ENCODE measurements at regions of chr6 and their contacts with region 1.

Region 1: DNA sequence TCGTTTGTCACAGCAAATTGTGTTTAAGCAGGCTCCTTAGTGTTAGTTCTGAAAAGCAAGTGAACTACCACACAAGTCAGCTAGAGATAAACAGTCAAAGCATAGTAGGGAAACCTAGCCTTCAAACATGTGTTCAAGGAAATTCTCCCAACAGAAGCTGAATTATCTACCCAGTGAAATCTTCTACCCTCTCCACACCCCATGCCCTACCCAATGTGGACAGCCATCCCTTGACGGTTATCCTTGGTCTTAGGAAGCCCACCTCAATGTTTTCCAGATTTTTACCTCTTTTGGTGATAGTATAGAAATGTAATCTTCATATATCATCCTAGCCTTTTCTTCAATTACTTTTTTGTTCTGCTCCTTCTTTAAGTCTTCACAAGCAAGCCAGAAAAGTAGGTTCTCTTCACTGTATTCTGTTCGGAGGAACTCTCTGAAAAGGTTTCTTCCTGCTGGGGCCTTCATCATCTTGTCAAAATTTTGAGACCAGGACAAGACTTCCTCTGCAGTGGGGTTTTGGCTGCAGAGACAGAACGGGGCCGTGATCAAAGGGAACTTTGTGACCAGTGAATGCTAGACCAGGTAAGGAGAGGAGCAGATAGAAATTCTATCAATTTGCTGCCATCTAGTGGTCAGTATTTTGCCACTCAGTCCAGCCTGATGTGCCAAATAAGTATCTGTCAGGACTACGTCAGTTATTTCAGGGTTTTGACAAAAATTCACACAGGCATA is 21.6 kb upstream of the MTRF1L start:
- DNase-seq: peak; percentile 17
- ATAC-seq: peak; percentile 78
- H3K4me3 Mint-ChIP-seq: no peak overlapping the region
- H3K27ac Mint-ChIP-seq: no peak overlapping the region
- H3K4me1 Mint-ChIP-seq: peaks cover 2% of the 10 kb centered on the region
- H3K27me3 Mint-ChIP-seq: peaks cover 16% of the 10 kb centered on the region
- CTCF ChIP-seq: no peak

Region 2: DNA sequence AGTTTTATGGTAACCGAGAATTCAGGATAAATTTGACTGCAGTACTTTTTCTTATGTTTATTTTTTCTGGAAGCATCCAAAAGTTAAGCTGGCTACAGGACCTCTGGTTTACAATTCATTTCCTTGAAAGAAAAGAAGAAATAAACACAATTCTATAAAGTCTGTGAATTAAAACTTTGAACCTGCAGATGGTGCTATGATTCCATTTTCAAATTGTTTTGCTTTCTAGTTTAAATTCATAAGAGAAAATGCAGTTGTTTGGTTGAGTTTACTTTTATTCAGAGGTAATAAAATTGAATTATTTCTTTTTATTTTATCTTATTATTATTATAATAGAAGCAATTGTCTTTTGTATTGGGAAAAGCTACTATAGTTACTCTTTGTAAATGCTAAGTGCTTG is 275.3 kb before region 1 on chr6:
- CTCF ChIA-PET with region 1: no interaction called
- POLR2A ChIA-PET with region 1: no interaction called
- intact Hi-C with region 1: loop called (anchors 5 kb)
- DNase-seq: no peak
- ATAC-seq: no peak
- H3K4me3 Mint-ChIP-seq: no peak overlapping the region
- H3K27ac Mint-ChIP-seq: no peak overlapping the region
- H3K4me1 Mint-ChIP-seq: no peaks in the 10 kb centered on the region
- H3K27me3 Mint-ChIP-seq: no peaks in the 10 kb centered on the region
- CTCF ChIP-seq: no peak

Region 3: DNA sequence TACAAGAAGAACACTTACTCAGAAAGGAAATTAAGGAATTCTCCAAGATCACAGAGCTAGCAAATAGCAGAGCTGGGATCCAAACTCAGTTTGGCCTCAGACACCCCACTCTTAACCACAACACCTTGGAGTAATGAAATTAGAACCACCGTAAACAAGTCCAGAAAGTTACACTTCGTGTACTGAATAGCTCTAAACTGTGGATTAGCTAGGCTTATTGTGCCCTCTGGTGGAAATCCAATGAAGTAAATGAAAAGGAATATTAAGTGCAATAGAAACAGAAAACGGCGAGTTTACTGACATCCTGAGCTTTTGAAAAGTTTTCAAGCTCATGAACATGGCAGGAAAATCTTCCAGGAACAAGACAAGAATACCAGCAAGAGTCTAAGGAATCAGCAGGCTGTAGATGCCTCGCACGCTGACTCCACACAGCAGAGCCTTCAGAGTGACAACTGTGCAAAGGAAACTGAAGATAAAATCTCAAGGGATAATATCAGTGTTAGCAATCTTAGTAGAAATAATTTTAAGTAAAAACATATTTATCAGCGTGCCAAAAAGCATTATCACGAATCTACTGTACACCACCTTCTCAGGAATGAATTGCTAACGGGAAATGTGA is 75.9 kb before region 1 on chr6:
- CTCF ChIA-PET with region 1: interaction called, 3 read pairs
- POLR2A ChIA-PET with region 1: no interaction called
- intact Hi-C with region 1: loop called (anchors 2 kb)
- DNase-seq: no peak
- ATAC-seq: no peak
- H3K4me3 Mint-ChIP-seq: no peak overlapping the region
- H3K27ac Mint-ChIP-seq: no peak overlapping the region
- H3K4me1 Mint-ChIP-seq: peaks cover 6% of the 10 kb centered on the region
- H3K27me3 Mint-ChIP-seq: peaks cover 24% of the 10 kb centered on the region
- CTCF ChIP-seq: peak; percentile 58

Region 4: GRCh38 chr6:152982768-152983636 is 41.1 kb before region 1 on chr6 and contains the start of gene FBXO5:
- CTCF ChIA-PET with region 1: no interaction called
- POLR2A ChIA-PET with region 1: no interaction called
- intact Hi-C with region 1: loop called (anchors 2 kb)
- DNase-seq: peak; percentile 95
- ATAC-seq: peak; percentile 92
- H3K4me3 Mint-ChIP-seq: peak within 1 kb of the TSS; percentile 100
- H3K27ac Mint-ChIP-seq: peak within 1 kb of the TSS; percentile 100
- H3K4me1 Mint-ChIP-seq: peaks cover 41% of the 10 kb centered on the region
- H3K27me3 Mint-ChIP-seq: no peaks in the 10 kb centered on the region
- CTCF ChIP-seq: no peak
- total RNA-seq, gene FBXO5: 11.9 and 13.3 TPM in 2 replicates

Region 5: DNA sequence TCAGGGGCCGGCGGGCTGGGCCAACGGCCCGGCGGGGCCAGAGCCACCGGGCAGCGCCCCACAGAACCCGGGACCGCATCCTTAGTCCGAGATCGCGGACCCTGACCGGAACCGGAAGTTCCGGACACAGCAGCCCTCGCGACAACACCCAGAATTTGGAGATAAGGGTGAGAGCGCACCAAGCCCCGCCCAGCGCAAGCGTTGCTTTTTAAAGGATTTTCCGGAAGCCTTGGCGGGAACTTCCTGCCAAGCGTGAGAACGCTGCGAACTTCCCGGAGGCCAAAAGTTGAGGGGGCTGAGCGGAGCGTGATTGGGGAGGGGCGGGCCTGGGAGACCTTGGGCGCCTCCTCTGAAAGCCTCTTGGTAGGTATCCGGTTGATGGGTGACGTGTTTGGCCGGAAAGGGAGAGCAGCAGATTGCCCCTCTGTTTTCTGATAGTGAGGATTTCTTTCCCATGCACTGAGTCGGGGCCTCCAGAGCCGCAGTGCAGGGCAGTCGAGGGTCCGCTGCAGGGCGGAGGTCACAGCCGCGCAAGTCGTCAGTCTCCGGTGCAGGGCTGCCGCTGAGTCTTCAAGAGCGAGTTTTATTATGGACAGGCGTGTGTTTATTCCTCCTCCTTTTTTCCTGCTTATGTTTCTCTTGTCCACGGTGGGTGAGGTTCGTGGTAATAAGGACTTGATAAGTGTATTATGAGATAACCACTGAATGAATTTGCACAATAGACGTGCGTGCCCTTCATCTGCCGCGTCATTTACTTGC is 21.4 kb before region 1 on chr6 and contains the start of gene MTRF1L:
- CTCF ChIA-PET with region 1: no interaction called
- POLR2A ChIA-PET with region 1: no interaction called
- intact Hi-C with region 1: loop called (anchors 1 kb)
- DNase-seq: peak; percentile 77
- ATAC-seq: peak; percentile 85
- H3K4me3 Mint-ChIP-seq: peak within 1 kb of the TSS; percentile 99
- H3K27ac Mint-ChIP-seq: peak within 1 kb of the TSS; percentile 93
- H3K4me1 Mint-ChIP-seq: peaks cover 42% of the 10 kb centered on the region
- H3K27me3 Mint-ChIP-seq: no peaks in the 10 kb centered on the region
- CTCF ChIP-seq: no peak
- total RNA-seq, gene MTRF1L: 20.7 and 21.3 TPM in 2 replicates

Region 6: DNA sequence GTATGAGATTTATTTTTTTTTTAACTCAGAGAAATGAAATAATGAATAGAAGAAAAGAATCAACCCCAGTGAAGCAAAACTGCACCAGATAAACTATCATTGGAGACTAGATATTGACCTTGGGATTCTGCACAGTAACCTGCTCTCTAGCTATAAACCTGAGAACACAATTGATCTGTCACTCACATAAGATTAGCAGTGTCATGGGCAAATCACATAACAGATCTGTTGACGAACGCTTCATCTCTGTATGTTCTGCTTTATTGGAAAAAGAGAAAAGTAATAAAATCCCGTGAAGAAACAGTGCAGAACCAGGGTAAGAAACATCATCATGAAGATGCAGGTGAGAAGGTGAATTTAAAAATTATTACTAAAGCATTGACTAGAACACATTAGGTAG is 159.8 kb after region 1 on chr6:
- CTCF ChIA-PET with region 1: no interaction called
- POLR2A ChIA-PET with region 1: no interaction called
- intact Hi-C with region 1: no loop called
- DNase-seq: no peak
- ATAC-seq: no peak
- H3K4me3 Mint-ChIP-seq: no peak overlapping the region
- H3K27ac Mint-ChIP-seq: no peak overlapping the region
- H3K4me1 Mint-ChIP-seq: no peaks in the 10 kb centered on the region
- H3K27me3 Mint-ChIP-seq: no peaks in the 10 kb centered on the region
- CTCF ChIP-seq: no peak

Measured in activated B cell treated with CpG ODN at 0.5 μM for 24 hours (primary cell).